Naive thymus-derived CD4-positive, alpha-beta T cell (primary cell): ENCODE measurements at regions of chr9 and their contacts with region 1.

Region 1: GRCh38 chr9:133144137-133144903 is 19.4 kb downstream of the GBGT1 start:
- DNase-seq: peak; percentile 81 to 92 (median 86)
- ATAC-seq: peak; percentile 69
- H3K4me3 ChIP-seq: peak overlapping the region; percentile 34
- H3K4me3 Mint-ChIP-seq: peak overlapping the region; percentile 70 to 88 (median 84)
- H3K27ac ChIP-seq: peak overlapping the region; percentile 70
- H3K27ac Mint-ChIP-seq: peak overlapping the region; percentile 87 to 96 (median 92)
- H3K4me1 ChIP-seq: peaks cover 51 to 71% of the 10 kb centered on the region in 2 donors
- H3K4me1 Mint-ChIP-seq: peaks cover 28 to 74% (median 65%) of the 10 kb centered on the region in 7 donors
- H3K27me3 ChIP-seq: no peaks in the 10 kb centered on the region
- H3K27me3 Mint-ChIP-seq: no peaks in the 10 kb centered on the region

Region 2: DNA sequence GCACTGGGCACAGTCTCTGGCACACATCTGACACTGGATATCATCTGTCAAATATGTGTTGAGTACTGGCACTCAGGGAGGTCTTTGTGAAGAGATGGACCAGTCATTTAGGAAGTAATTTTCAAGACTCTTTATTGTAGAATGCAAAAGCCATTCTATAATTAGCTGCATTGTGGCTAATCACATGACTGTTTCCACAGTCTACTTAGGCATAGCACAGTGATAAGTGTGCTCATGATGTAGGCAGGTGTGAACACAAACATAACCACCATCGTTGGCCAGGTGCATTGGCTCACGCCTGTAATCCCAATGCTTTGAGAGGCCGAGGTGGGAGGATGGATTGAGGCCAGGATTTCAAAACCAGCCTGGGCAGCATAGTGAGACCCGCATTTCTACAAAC is 672.1 kb before region 1 on chr9:
- CTCF ChIA-PET with region 1: no interaction called
- POLR2A ChIA-PET with region 1: no interaction called
- intact Hi-C with region 1: no loop called
- DNase-seq: no peak
- ATAC-seq: no peak
- H3K4me3 ChIP-seq: no peak overlapping the region
- H3K4me3 Mint-ChIP-seq: no peak overlapping the region
- H3K27ac ChIP-seq: no peak overlapping the region
- H3K27ac Mint-ChIP-seq: no peak overlapping the region
- H3K4me1 ChIP-seq: no peaks in the 10 kb centered on the region
- H3K4me1 Mint-ChIP-seq: no peaks in the 10 kb centered on the region
- H3K27me3 ChIP-seq: no peaks in the 10 kb centered on the region
- H3K27me3 Mint-ChIP-seq: peaks cover 6 to 26% (median 13%) of the 10 kb centered on the region in 5 donors

Region 3: GRCh38 chr9:133023117-133023890 is 121.0 kb before region 1 on chr9:
- CTCF ChIA-PET with region 1: interaction called, 11 read pairs
- POLR2A ChIA-PET with region 1: no interaction called
- intact Hi-C with region 1: loop called (anchors 1 kb)
- DNase-seq: peak in 5 of 9 donors; percentile 11 to 55 (median 14)
- ATAC-seq: no peak
- H3K4me3 ChIP-seq: no peak overlapping the region
- H3K4me3 Mint-ChIP-seq: peak overlapping the region in 1 of 10 donors; percentile 66
- H3K27ac ChIP-seq: no peak overlapping the region
- H3K27ac Mint-ChIP-seq: peak overlapping the region in 1 of 9 donors; percentile 49
- H3K4me1 ChIP-seq: peaks cover 0 to 8% of the 10 kb centered on the region in 2 donors
- H3K4me1 Mint-ChIP-seq: peaks cover 0 to 27% (median 19%) of the 10 kb centered on the region in 7 donors
- H3K27me3 ChIP-seq: no peaks in the 10 kb centered on the region
- H3K27me3 Mint-ChIP-seq: no peaks in the 10 kb centered on the region

Region 4: DNA sequence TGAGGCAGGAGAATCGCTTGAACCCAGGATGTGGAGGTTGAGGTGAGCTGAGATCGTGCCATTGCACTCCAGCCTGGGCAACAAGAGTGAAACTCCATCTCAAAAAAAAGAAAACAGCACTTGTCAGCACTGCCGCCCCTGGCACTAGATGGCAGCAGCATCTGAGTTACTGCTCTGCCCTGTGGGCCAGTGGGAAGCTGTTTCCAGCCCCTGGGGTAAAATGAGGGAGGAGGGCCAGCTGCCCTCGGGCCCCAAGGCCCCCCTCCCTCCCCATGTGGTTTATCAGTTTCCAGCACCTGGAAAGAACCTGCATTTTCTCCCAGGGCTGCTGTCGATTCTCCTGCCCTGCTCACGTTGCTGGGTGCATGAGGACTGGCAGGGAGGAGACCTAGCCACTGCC is 95.8 kb before region 1 on chr9:
- CTCF ChIA-PET with region 1: interaction called, 3 read pairs
- POLR2A ChIA-PET with region 1: no interaction called
- intact Hi-C with region 1: loop called (anchors 1 kb)
- DNase-seq: peak in 3 of 9 donors; percentile 15 to 40 (median 17)
- ATAC-seq: peak; percentile 63
- H3K4me3 ChIP-seq: no peak overlapping the region
- H3K4me3 Mint-ChIP-seq: no peak overlapping the region
- H3K27ac ChIP-seq: no peak overlapping the region
- H3K27ac Mint-ChIP-seq: no peak overlapping the region
- H3K4me1 ChIP-seq: no peaks in the 10 kb centered on the region
- H3K4me1 Mint-ChIP-seq: peaks cover 0 to 7% (median 2%) of the 10 kb centered on the region in 7 donors
- H3K27me3 ChIP-seq: no peaks in the 10 kb centered on the region
- H3K27me3 Mint-ChIP-seq: no peaks in the 10 kb centered on the region

Region 5: DNA sequence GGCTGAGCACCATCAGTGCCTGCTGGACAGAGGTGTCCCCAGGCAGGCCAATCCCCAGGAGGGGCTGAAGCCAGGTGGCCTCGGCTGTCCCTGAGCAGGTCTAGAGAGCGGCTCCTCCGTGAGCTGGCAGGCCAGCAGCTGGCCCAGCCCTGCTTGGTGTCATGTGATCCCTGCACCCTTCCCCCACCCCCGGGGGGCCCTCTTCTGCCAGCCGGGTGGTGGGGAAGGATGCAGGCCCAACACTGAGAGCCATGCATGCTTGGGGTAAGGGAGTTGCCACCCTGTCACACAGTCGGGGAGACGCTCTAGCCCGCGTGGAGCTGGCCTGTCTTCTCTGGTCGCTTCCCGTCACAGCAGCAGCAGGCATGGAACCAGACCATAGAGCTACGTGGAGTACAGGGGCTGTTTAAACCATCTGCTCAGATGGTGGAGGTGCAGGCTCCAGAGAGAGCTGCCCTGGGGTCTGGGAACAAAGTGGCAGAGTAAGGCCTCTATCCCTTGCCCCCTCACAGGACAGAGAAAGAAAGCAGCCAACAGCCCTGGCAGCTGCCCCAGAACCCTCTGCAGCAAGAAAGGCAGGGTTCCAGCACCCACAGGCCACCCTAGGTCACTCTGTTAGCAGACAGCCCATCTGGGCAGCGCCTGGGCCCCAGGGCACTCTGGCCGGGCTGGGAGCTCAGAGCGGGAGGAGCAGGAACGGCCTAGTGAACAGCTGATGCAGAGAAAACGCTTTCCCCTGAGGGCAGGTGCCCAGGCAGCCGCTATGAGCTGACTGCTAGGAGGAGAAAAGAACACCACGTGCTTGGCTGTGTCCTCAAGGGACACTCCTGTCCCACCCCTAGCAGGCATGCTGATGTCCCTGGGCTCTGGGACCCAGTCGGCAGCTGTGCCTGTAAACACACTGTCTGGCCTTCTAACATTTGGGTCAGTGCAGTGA is 30.1 kb before region 1 on chr9:
- CTCF ChIA-PET with region 1: interaction called, 161 read pairs
- POLR2A ChIA-PET with region 1: interaction called, 15 read pairs
- intact Hi-C with region 1: no loop called
- DNase-seq: peak in 1 of 9 donors; percentile 7
- ATAC-seq: no peak
- H3K4me3 ChIP-seq: no peak overlapping the region
- H3K4me3 Mint-ChIP-seq: peak overlapping the region in 7 of 10 donors; percentile 1 to 54 (median 25)
- H3K27ac ChIP-seq: peak overlapping the region; percentile 19
- H3K27ac Mint-ChIP-seq: peak overlapping the region in 4 of 9 donors; percentile 53 to 89 (median 66)
- H3K4me1 ChIP-seq: peaks cover 22 to 52% of the 10 kb centered on the region in 2 donors
- H3K4me1 Mint-ChIP-seq: peaks cover 20 to 59% (median 28%) of the 10 kb centered on the region in 7 donors
- H3K27me3 ChIP-seq: no peaks in the 10 kb centered on the region
- H3K27me3 Mint-ChIP-seq: no peaks in the 10 kb centered on the region

Region 6: DNA sequence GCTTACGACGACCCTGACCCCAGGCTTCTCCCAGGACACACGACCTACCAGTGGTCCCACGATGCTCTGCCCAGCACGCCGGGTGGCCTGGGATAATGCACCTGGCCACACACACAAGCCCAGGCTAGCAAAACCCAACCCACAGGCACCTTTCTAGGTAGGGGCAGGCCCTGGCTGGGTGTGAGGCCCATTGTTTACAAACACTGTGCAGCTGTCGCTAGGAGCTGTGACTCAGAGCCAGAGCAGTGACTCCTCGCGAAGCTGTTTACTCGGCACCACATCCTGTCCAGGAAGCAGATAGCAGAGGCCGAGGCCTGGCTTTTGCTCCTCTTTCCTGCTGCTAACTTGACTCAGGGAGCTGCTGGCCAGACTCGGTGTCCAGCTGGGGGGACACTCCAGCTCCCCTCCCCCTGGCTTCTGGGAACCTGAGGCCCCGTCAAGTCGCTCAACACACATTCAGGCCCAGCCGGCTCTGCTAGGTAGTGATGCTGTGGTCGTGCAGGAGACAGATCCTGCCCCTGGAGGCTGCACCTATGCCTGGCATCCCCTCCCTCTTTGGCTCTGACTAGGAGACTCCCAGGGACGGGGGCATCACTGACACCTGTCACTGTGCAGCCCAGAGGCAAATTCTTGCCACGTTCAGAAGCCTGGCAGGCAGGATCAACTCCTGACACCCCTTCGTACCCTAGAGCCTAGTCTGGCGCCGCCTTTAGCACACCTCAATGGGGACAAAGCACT is 10.5 kb before region 1 on chr9:
- CTCF ChIA-PET with region 1: interaction called, 48 read pairs
- POLR2A ChIA-PET with region 1: interaction called, 65 read pairs
- intact Hi-C with region 1: loop called (anchors 1 kb)
- DNase-seq: peak; percentile 69 to 94 (median 90)
- ATAC-seq: peak; percentile 92
- H3K4me3 ChIP-seq: peak overlapping the region; percentile 20
- H3K4me3 Mint-ChIP-seq: peak overlapping the region; percentile 72 to 85 (median 80)
- H3K27ac ChIP-seq: peak overlapping the region; percentile 92
- H3K27ac Mint-ChIP-seq: peak overlapping the region; percentile 99 to 100 (median 100)
- H3K4me1 ChIP-seq: peaks cover 57 to 68% of the 10 kb centered on the region in 2 donors
- H3K4me1 Mint-ChIP-seq: peaks cover 31 to 75% (median 63%) of the 10 kb centered on the region in 7 donors
- H3K27me3 ChIP-seq: no peaks in the 10 kb centered on the region
- H3K27me3 Mint-ChIP-seq: no peaks in the 10 kb centered on the region

Region 7: GRCh38 chr9:133269537-133270362 is 125.4 kb after region 1 on chr9:
- CTCF ChIA-PET with region 1: no interaction called
- POLR2A ChIA-PET with region 1: no interaction called
- intact Hi-C with region 1: no loop called
- DNase-seq: no peak
- ATAC-seq: no peak
- H3K4me3 ChIP-seq: no peak overlapping the region
- H3K4me3 Mint-ChIP-seq: no peak overlapping the region
- H3K27ac ChIP-seq: no peak overlapping the region
- H3K27ac Mint-ChIP-seq: no peak overlapping the region
- H3K4me1 ChIP-seq: no peaks in the 10 kb centered on the region
- H3K4me1 Mint-ChIP-seq: peaks cover 0 to 14% (median 2%) of the 10 kb centered on the region in 7 donors
- H3K27me3 ChIP-seq: no peaks in the 10 kb centered on the region
- H3K27me3 Mint-ChIP-seq: peaks cover 38 to 55% (median 48%) of the 10 kb centered on the region in 5 donors